Posterior cingulate gyrus (tissue), 11 donors: ENCODE measurements at regions of chr2 and their contacts with region 1.

Region 1: GRCh38 chr2:38602732-38603401 is at the start of gene HNRNPLL:
- DNase-seq: peak; percentile 96 to 99 (median 97)

Region 2: DNA sequence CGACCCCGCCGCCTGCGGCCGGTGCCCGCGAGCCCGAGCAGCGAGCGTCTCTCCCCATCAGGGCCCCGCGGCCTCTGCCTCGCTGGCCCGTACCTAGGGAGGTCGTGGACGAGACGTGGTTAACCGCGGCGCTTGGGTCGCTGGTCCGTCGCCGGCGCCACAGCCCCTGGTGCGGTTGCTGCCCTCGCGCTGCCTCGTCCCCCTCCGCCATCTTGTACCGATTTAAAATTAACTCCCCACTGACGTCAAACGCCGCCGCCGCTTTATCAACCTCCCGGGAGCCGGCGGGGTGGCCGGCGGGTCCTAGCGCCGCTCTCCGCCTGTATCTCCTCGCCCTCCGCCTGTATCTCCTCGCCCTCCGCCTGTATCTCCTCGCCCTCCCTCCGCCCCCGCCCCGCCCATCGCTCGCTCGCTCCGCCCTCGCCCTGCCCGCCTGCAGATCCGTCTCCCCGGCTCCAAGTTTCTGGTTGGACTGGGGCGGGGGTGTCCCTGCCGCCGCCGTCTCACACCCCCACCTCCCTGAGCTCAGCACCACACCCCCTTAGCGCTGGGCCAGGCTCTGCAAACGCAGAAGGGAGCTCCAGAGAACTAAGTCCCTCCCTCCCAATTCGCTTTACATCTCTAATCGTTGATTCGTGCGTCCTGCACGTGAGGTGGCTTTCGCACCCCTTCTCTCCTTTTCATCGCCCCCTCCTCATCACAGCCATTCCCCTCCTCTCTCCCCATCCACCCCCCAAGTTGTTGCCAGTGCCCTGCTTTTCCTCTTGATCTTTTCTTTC is 225.6 kb before region 1 on chr2 and contains the start of gene ATL2:
- intact Hi-C with region 1: loop called (anchors 5 kb)
- DNase-seq: peak; percentile 89 to 99 (median 94)

Region 3: DNA sequence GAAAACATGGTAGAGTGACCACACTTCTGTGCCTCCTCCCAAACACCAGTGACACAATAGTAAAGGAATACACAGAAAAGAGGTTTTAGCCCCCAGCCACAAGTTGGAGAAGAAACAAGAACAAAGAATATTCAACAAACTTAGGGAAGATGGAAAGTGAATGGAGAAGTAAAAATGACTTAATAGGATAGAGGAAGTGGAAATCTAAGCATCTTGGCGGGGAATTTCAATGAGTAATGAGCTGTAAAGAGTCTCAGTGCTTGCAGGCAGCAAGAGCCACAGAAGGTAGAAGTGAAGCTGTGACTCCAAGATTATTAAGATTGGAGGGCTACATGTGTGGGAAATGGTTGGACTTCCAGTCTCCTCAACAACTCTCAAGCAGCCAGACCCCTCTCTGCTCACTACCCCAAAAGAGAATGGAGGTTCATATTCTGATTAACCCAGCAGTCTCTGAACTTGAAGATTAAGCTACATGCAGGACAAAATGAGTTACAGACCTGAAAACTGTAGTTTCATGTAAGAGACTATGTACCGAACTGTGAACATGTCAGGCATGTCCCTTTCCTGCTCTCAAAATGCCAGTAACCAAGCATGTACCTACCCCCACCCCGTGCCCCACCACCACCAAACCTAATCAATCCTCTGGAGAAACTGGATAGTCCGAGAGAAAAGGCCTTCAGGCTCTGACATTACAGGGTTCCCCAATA is 16.7 kb after region 1 on chr2:
- intact Hi-C with region 1: no loop called
- DNase-seq: no peak

Region 4: DNA sequence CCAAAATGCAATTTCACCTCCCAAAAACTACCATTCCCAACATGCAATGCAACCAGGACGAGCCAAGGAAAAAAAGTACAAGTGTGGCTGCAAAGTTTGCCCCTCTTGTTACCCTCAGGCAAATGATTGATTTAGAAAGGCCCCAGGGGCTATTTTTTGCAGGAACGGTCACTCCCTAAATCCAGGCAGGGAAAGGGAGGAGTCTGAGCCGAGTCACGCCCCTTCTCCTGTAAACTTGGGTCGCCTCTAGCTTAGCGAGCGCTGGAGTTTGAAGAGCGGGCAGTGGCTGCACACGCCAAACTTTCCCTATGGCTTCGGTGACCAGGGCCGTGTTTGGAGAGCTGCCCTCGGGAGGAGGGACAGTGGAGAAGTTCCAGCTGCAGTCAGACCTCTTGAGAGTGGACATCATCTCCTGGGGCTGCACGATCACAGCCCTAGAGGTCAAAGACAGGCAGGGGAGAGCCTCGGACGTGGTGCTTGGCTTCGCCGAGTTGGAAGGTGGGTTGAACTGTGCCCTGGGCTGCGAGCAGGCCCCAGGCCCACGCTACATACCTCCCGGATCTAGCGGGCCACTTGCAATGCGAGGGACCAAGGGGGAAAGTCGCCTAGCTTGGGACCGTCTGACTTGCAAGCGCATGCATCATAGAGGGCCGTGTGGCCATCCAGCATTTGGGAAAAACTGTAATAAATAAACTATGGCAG is 63.1 kb after region 1 on chr2 and contains the start of gene GALM:
- intact Hi-C with region 1: loop called (anchors 2 kb)
- DNase-seq: peak in 8 of 10 donors; percentile 12 to 89 (median 34)

Region 5: GRCh38 chr2:38720613-38721241 is 117.9 kb after region 1 on chr2:
- intact Hi-C with region 1: no loop called
- DNase-seq: peak in 7 of 10 donors; percentile 13 to 92 (median 48)

Region 6: GRCh38 chr2:38750891-38751595 is 148.2 kb after region 1 on chr2 and contains the start of gene SRSF7:
- intact Hi-C with region 1: loop called (anchors 2 kb)
- DNase-seq: peak; percentile 92 to 99 (median 96)